PC-3 (cell line): ENCODE measurements at regions of chr1 and their contacts with region 1.

Region 1: GRCh38 chr1:205454903-205455335 is 926 bp downstream of the BLACAT1 start:
- DNase-seq: no peak
- ATAC-seq: no peak
- H3K4me3 ChIP-seq: no peak overlapping the region
- H3K27ac ChIP-seq: no peak overlapping the region
- H3K4me1 ChIP-seq: peaks cover 13% of the 10 kb centered on the region
- H3K27me3 ChIP-seq: peaks cover 70% of the 10 kb centered on the region
- CTCF ChIP-seq: 0 out of 2 replicates have a peak, but pooled peaks have one; percentile 13

Region 2: DNA sequence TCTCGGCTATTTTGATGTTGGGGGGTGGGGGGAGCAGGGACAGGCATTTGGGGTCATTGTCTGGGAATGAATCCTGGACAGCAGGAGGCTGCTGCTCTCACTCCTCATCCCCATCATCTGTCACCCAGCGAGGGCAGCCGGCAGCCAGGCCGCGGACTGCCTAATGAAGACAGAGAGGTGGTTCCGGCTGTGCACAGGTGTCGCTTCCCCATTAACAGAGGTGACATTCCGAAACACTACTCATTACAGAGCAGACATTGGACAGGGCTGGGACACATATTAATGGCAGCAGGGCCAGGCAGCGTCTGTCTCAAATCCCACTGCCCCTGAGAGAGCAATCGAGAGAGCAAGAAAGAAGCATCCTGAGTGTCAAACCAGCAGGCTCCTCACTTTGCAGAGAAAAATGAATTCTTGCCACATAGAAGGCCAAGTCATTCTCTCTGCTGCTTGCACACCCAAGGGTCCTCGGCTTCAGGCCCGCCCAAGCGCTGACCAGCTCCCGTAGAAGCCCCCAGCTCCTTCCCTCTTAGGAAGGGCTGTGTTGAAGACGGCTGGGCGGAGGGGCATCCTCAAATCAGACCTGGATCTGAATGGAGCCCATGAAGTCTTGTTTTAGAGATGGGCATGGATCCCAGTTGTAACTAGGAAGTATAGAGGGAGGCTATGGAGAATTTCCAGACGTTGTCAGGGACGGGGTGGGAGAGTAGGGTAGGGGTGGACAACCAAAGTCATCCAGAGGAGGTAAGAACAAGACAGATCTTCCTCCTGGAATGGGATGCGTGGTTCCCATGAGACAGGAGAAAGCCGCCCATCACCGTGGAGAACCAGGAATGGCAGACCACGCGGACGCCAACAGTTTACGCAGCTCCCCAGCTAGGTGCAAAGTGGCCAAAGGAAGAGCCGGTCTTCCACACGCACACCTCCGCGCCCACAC is 24.9 kb before region 1 on chr1:
- CTCF ChIA-PET with region 1: no interaction called
- POLR2A ChIA-PET with region 1: interaction called, 11 read pairs
- intact Hi-C with region 1: no loop called
- DNase-seq: no peak
- ATAC-seq: no peak
- H3K4me3 ChIP-seq: peak overlapping the region; percentile 46; the same call in 1 of the 2 replicates
- H3K27ac ChIP-seq: no peak overlapping the region
- H3K4me1 ChIP-seq: no peaks in the 10 kb centered on the region
- H3K27me3 ChIP-seq: peaks cover 42% of the 10 kb centered on the region
- CTCF ChIP-seq: no peak